B cell (primary cell): ENCODE measurements at regions of chr11 and their contacts with region 1.

Region 1: DNA sequence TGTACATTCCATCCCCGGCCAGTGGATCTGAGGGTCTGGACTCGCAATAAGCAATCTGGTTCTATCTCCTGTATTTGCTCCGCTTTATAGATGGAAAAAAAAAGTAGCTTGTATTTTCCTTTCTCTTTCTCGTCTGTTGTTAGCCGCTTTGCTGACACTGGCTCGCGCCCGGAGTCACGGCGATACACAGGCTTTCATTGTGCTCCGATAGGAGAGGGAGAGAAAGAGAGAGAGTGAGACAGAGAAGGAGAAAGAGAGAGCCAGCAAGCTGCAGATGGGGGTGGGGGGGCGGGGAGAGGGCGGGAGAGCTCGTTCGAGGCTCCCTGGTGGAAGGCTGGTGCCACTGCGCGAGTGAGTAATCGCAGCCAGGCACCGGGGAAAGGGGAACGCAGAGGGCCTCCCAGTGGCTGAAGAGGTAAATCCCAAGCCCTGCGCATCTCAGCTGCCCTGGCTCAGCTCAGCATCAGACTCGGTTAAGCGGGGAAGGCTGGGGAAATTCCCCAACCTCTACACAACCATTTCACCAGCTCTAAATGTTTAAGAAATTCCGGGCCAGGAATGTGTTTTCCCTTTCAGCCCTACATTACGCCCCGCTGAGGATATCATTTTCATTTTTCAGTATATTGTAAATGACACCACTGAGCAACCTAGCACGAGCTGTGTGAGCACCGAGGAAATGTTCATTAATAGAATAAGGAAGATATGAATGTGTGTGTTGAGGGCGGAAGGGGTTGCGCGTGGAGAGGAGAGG is at the start of gene MAML2:
- DNase-seq: peak; percentile 93
- ATAC-seq: peak; percentile 86
- H3K4me3 ChIP-seq: peak within 1 kb of the TSS; percentile 82 to 100 (median 92)
- H3K4me3 Mint-ChIP-seq: peak within 1 kb of the TSS; percentile 99
- H3K27ac ChIP-seq: peak within 1 kb of the TSS; percentile 45 to 77
- H3K27ac Mint-ChIP-seq: peak within 1 kb of the TSS; percentile 95
- H3K4me1 ChIP-seq: peaks cover 38 to 43% of the 10 kb centered on the region in 2 donors
- H3K4me1 Mint-ChIP-seq: peaks cover 51% of the 10 kb centered on the region
- H3K27me3 ChIP-seq: no peaks in the 10 kb centered on the region
- H3K27me3 Mint-ChIP-seq: no peaks in the 10 kb centered on the region
- CTCF ChIP-seq: peak; percentile 94
- total RNA-seq, gene MAML2: 26.0 and 26.4 TPM in 2 replicates

Region 2: DNA sequence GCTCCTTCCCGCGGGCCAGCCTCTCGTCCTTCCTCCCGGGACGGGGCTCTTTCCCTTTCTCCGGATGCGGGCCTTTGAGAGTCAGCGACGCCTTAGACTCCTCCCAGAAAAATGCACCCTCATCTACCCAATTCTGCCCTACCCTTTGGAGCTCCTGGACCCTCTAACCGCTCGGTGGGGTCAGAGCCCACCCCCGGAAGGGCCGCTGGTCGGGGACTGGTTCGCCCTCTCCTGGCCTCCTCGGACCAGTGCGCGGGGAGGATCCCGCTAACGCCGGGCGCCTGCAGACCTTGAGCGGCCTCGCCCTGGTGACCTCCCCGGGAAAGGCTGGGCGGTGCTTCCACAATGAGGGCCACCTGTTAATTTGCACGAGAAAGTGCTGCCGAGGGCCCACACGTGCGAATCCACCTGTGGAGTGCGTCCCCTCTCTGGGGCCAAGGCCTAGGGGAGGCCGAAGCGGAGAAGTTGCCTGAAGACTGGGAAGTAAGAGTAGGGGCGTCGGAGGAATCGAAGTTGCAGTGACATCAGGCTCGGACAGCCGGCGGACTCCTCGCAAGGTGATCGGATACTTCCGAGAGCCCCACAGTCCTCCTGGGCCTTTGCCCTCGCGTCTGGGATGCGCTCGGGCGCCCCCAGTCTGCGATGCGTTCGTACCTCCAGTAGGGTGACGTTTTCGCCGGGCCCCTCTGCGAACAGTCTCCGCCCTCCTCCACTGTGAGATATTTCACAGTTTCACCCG is 1192.0 kb before region 1 on chr11:
- CTCF ChIA-PET with region 1: interaction called, 6 read pairs
- POLR2A ChIA-PET with region 1: no interaction called
- intact Hi-C with region 1: loop called (anchors 5 kb)
- DNase-seq: peak; percentile 96
- ATAC-seq: peak; percentile 90
- H3K4me3 ChIP-seq: peak overlapping the region; percentile 52 to 91 (median 82)
- H3K4me3 Mint-ChIP-seq: peak overlapping the region; percentile 95
- H3K27ac ChIP-seq: peak overlapping the region; percentile 88 to 91
- H3K27ac Mint-ChIP-seq: peak overlapping the region; percentile 96
- H3K4me1 ChIP-seq: peaks cover 28 to 43% of the 10 kb centered on the region in 2 donors
- H3K4me1 Mint-ChIP-seq: peaks cover 46% of the 10 kb centered on the region
- H3K27me3 ChIP-seq: no peaks in the 10 kb centered on the region
- H3K27me3 Mint-ChIP-seq: no peaks in the 10 kb centered on the region
- CTCF ChIP-seq: peak; percentile 86

Region 3: GRCh38 chr11:96012086-96012824 is 330.9 kb before region 1 on chr11:
- CTCF ChIA-PET with region 1: interaction called, 12 read pairs
- POLR2A ChIA-PET with region 1: no interaction called
- intact Hi-C with region 1: loop called (anchors 1 kb)
- DNase-seq: peak; percentile 82
- ATAC-seq: peak; percentile 84
- H3K4me3 ChIP-seq: peak overlapping the region in 2 of 5 experiments; percentile 15 to 26
- H3K4me3 Mint-ChIP-seq: peak overlapping the region; percentile 44
- H3K27ac ChIP-seq: peak overlapping the region; percentile 23 to 79
- H3K27ac Mint-ChIP-seq: peak overlapping the region; percentile 82
- H3K4me1 ChIP-seq: peaks cover 38% of the 10 kb centered on the region in 2 donors
- H3K4me1 Mint-ChIP-seq: peaks cover 47% of the 10 kb centered on the region
- H3K27me3 ChIP-seq: no peaks in the 10 kb centered on the region
- H3K27me3 Mint-ChIP-seq: no peaks in the 10 kb centered on the region
- CTCF ChIP-seq: peak; percentile 51

Region 4: DNA sequence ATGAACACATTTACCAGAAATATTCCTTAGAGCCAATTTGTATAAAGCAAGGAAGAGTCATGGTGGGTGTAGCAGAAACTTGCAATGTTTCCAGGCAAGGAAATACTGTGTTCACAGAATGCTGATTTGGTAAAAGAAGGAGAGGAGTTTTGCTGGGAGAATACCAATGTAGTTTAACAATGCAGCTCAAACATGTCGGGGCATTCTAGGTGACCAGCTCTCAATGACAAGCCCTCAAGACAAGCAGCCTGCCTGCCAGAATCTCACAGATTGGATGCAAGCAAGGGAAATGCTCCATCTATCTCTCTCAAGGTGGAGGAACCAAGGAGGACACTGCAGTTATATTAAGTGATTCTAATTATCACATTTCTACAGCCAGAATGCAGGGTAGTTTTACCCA is 190.5 kb before region 1 on chr11:
- CTCF ChIA-PET with region 1: interaction called, 10 read pairs
- POLR2A ChIA-PET with region 1: interaction called, 4 read pairs
- intact Hi-C with region 1: no loop called
- DNase-seq: no peak
- ATAC-seq: no peak
- H3K4me3 ChIP-seq: no peak overlapping the region
- H3K4me3 Mint-ChIP-seq: no peak overlapping the region
- H3K27ac ChIP-seq: no peak overlapping the region
- H3K27ac Mint-ChIP-seq: no peak overlapping the region
- H3K4me1 ChIP-seq: peaks cover 14 to 18% of the 10 kb centered on the region in 2 donors
- H3K4me1 Mint-ChIP-seq: peaks cover 29% of the 10 kb centered on the region
- H3K27me3 ChIP-seq: no peaks in the 10 kb centered on the region
- H3K27me3 Mint-ChIP-seq: no peaks in the 10 kb centered on the region
- CTCF ChIP-seq: no peak

Region 5: DNA sequence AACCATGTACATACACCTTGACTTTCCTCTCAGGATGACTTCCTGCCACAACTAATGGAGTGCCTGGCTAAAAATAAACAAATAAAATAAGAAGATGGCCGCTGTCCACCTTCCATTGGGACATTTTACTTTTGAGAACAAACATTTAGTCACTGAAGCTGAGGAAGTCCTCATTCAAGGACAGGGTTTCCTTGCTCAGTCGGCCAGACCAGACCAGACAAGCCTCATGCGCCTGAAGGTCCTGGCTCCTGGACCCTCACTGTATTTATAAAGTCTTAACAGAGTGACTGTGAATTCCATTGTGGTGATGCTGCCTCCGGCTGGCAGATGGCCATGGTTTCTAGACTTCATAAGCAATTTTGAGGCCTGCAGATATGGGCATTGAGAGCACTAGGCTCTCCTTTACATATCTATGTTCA is 114.7 kb before region 1 on chr11:
- CTCF ChIA-PET with region 1: interaction called, 15 read pairs
- POLR2A ChIA-PET with region 1: no interaction called
- intact Hi-C with region 1: no loop called
- DNase-seq: no peak
- ATAC-seq: no peak
- H3K4me3 ChIP-seq: no peak overlapping the region
- H3K4me3 Mint-ChIP-seq: no peak overlapping the region
- H3K27ac ChIP-seq: no peak overlapping the region
- H3K27ac Mint-ChIP-seq: no peak overlapping the region
- H3K4me1 ChIP-seq: peaks cover 20 to 35% of the 10 kb centered on the region in 2 donors
- H3K4me1 Mint-ChIP-seq: peaks cover 46% of the 10 kb centered on the region
- H3K27me3 ChIP-seq: no peaks in the 10 kb centered on the region
- H3K27me3 Mint-ChIP-seq: no peaks in the 10 kb centered on the region
- CTCF ChIP-seq: no peak

Region 6: DNA sequence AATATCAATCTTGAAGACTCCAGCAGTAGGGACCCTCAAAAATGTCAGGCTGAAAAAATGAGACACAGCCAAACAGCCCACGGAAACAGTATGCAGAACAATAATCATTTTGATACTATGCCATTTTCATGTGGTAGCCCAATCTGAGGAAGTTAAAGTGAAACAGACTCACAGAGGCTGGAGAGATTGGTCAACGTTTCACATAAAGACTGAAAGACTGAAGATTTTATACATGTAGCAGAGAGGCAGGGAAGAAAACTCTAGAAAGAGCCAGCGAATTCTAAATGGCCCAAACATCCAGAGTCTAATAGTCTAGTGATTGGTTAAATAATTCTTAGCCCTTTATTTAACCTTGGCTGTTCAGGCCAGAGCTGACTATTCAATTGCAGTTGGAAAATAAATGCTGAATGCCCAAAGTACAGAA is 49.5 kb before region 1 on chr11:
- CTCF ChIA-PET with region 1: interaction called, 19 read pairs
- POLR2A ChIA-PET with region 1: no interaction called
- intact Hi-C with region 1: loop called (anchors 5 kb)
- DNase-seq: peak; percentile 51
- ATAC-seq: peak; percentile 80
- H3K4me3 ChIP-seq: peak overlapping the region in 1 of 5 experiments; percentile 35
- H3K4me3 Mint-ChIP-seq: peak overlapping the region; percentile 55
- H3K27ac ChIP-seq: peak overlapping the region in 1 of 2 donors; percentile 48
- H3K27ac Mint-ChIP-seq: peak overlapping the region; percentile 38
- H3K4me1 ChIP-seq: peaks cover 14 to 19% of the 10 kb centered on the region in 2 donors
- H3K4me1 Mint-ChIP-seq: peaks cover 36% of the 10 kb centered on the region
- H3K27me3 ChIP-seq: no peaks in the 10 kb centered on the region
- H3K27me3 Mint-ChIP-seq: no peaks in the 10 kb centered on the region
- CTCF ChIP-seq: no peak

Region 7: DNA sequence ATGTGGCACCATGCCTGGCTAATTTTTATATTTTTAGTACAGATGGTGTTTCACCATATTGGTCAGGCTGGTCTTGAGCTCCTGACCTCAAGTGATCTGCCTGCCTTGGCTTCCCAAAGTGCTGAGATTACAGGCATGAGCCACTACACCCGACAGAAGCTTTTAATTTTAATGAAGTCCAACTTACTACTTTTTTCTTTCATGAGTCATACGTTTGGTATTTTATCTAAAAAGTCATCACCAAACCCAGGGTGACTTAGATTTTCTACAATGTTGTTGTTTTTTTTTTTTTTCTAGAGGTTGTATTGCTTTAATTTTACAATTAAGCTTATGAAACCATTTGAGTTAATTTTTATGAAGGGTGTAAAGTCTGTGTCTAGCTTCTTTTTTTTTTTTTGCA is 81.6 kb after region 1 on chr11:
- CTCF ChIA-PET with region 1: interaction called, 14 read pairs
- POLR2A ChIA-PET with region 1: no interaction called
- intact Hi-C with region 1: no loop called
- DNase-seq: no peak
- ATAC-seq: no peak
- H3K4me3 ChIP-seq: no peak overlapping the region
- H3K4me3 Mint-ChIP-seq: no peak overlapping the region
- H3K27ac ChIP-seq: no peak overlapping the region
- H3K27ac Mint-ChIP-seq: no peak overlapping the region
- H3K4me1 ChIP-seq: no peaks in the 10 kb centered on the region
- H3K4me1 Mint-ChIP-seq: no peaks in the 10 kb centered on the region
- H3K27me3 ChIP-seq: peaks cover 0 to 12% (median 0%) of the 10 kb centered on the region in 4 experiments
- H3K27me3 Mint-ChIP-seq: peaks cover 23% of the 10 kb centered on the region
- CTCF ChIP-seq: no peak

Region 8: DNA sequence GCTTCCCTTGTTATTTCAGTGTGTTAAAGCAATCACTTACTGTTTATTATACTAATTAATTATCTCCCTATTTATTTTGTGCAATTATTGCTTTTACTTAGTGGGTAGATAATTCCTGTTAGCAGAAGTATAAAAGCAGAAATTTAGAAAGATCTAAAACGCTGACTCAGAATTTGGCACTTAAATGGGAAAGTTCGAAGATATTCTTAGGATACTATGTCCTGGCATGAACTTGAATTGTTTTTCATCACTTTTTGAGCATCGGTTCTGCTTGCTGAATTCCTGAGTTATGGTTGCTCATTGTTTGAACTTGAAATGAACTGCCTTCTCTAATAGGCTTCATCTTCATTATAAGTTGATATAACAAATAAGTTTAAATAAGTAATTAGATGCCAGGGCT is 372.1 kb after region 1 on chr11:
- CTCF ChIA-PET with region 1: no interaction called
- POLR2A ChIA-PET with region 1: no interaction called
- intact Hi-C with region 1: no loop called
- DNase-seq: no peak
- ATAC-seq: no peak
- H3K4me3 ChIP-seq: no peak overlapping the region
- H3K4me3 Mint-ChIP-seq: no peak overlapping the region
- H3K27ac ChIP-seq: no peak overlapping the region
- H3K27ac Mint-ChIP-seq: no peak overlapping the region
- H3K4me1 ChIP-seq: no peaks in the 10 kb centered on the region
- H3K4me1 Mint-ChIP-seq: no peaks in the 10 kb centered on the region
- H3K27me3 ChIP-seq: no peaks in the 10 kb centered on the region
- H3K27me3 Mint-ChIP-seq: no peaks in the 10 kb centered on the region
- CTCF ChIP-seq: no peak